OCI-LY7 (cell line): ENCODE measurements at regions of chr11 and their contacts with region 1.

Region 1: GRCh38 chr11:6817694-6818093 is 18.2 kb upstream of the OR6A2 start:
- DNase-seq: no peak
- H3K4me3 ChIP-seq: no peak overlapping the region
- H3K27ac ChIP-seq: no peak overlapping the region
- H3K4me1 ChIP-seq: no peaks in the 10 kb centered on the region
- CTCF ChIP-seq: no peak

Region 2: GRCh38 chr11:6794639-6795038 is 23.1 kb before region 1 on chr11:
- CTCF ChIA-PET with region 1: interaction called, 3 read pairs
- POLR2A ChIA-PET with region 1: interaction called, 3 read pairs
- intact Hi-C with region 1: loop called (anchors 2 kb)
- DNase-seq: no peak
- H3K4me3 ChIP-seq: no peak overlapping the region
- H3K27ac ChIP-seq: no peak overlapping the region
- H3K4me1 ChIP-seq: no peaks in the 10 kb centered on the region
- CTCF ChIP-seq: no peak